ENCODE measurements at regions of chr21 and their contacts with region 1.

Region 1: GRCh38 chr21:46643375-46643774 is 7.9 kb downstream of the PRMT2 start:
- DNase-seq: no peak
- ATAC-seq: no peak
- H3K4me3 Mint-ChIP-seq: no peak overlapping the region
- H3K27ac Mint-ChIP-seq: no peak overlapping the region
- H3K4me1 Mint-ChIP-seq: peaks cover 51% of the 10 kb centered on the region
- H3K27me3 Mint-ChIP-seq: no peaks in the 10 kb centered on the region

Region 2: GRCh38 chr21:45995686-45996179 is 647.6 kb before region 1 on chr21:
- CTCF ChIA-PET with region 1: no interaction called
- POLR2A ChIA-PET with region 1: no interaction called
- intact Hi-C with region 1: no loop called
- DNase-seq: peak; percentile 30
- ATAC-seq: peak; percentile 57
- H3K4me3 Mint-ChIP-seq: no peak overlapping the region
- H3K27ac Mint-ChIP-seq: no peak overlapping the region
- H3K4me1 Mint-ChIP-seq: no peaks in the 10 kb centered on the region
- H3K27me3 Mint-ChIP-seq: no peaks in the 10 kb centered on the region

Region 3: DNA sequence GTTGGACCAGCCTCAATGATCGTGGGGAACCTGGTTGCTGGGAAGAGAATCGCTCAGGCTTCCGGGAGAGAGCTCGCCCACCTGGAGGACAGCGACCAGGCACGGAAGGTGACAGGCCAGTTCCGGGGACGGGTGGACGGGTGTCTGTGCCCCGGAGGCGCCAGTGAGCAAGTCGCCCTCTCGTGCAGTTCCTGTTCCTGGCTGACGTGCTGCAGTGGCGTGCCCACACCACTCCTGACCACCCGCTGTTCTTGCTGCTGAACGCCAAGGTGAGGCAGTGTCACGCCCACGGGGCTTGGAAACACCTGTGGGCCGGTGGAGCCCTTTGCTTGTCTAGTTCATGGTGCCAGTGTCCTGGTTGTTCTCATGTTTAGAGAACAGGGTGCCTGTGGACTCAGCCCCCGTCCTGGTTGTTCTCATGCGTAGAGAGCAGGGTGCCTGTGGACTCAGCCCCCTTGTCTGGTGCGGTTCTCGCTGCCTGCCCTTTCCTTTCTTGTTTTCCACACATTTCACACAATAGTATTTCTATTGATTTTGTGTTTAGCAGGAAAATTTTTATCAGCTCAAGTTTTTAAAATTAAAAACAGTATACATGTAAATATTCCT is 91.6 kb before region 1 on chr21:
- CTCF ChIA-PET with region 1: interaction called, 10 read pairs
- POLR2A ChIA-PET with region 1: no interaction called
- intact Hi-C with region 1: no loop called
- DNase-seq: peak; percentile 66
- ATAC-seq: peak; percentile 75
- H3K4me3 Mint-ChIP-seq: peak overlapping the region; percentile 55
- H3K27ac Mint-ChIP-seq: peak overlapping the region; percentile 87
- H3K4me1 Mint-ChIP-seq: peaks cover 58% of the 10 kb centered on the region
- H3K27me3 Mint-ChIP-seq: no peaks in the 10 kb centered on the region

Measured in activated CD4-positive, alpha-beta T cell treated with anti-CD3 and anti-CD28 coated beads for 36 hours (primary cell).